Activated CD8-positive, alpha-beta memory T cell treated with anti-CD3 and anti-CD28 coated beads, Interleukin-2, amount 10 ng/mL, durations not matched to agents 7 days and 5 days (primary cell): ENCODE measurements at regions of chr16 and their contacts with region 1.

Region 1: DNA sequence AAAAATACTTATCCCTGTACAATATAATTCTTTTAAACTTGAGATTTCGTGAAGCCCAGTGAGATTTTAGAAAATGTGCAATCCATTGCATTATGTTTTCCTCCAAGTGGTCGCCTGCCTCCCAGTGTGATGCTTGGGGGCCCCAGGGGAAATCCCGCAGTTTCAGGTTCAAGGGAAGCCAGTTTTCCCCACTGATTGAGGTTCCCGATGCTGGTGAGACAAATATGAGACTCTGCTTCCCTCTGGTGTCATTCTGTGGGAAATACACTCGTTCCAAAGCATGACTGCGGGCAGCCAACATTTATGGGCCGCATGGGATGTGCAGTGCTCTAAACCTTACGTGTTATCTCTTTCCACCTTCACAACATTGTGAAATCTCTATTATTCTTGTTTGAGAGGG is 200.8 kb downstream of the PRKCB start:
- DNase-seq: no peak
- ATAC-seq: peak; percentile 32
- H3K4me3 Mint-ChIP-seq: no peak overlapping the region
- H3K27ac Mint-ChIP-seq: peak overlapping the region; percentile 28
- H3K4me1 Mint-ChIP-seq: peaks cover 45% of the 10 kb centered on the region
- H3K27me3 Mint-ChIP-seq: no peaks in the 10 kb centered on the region

Region 2: DNA sequence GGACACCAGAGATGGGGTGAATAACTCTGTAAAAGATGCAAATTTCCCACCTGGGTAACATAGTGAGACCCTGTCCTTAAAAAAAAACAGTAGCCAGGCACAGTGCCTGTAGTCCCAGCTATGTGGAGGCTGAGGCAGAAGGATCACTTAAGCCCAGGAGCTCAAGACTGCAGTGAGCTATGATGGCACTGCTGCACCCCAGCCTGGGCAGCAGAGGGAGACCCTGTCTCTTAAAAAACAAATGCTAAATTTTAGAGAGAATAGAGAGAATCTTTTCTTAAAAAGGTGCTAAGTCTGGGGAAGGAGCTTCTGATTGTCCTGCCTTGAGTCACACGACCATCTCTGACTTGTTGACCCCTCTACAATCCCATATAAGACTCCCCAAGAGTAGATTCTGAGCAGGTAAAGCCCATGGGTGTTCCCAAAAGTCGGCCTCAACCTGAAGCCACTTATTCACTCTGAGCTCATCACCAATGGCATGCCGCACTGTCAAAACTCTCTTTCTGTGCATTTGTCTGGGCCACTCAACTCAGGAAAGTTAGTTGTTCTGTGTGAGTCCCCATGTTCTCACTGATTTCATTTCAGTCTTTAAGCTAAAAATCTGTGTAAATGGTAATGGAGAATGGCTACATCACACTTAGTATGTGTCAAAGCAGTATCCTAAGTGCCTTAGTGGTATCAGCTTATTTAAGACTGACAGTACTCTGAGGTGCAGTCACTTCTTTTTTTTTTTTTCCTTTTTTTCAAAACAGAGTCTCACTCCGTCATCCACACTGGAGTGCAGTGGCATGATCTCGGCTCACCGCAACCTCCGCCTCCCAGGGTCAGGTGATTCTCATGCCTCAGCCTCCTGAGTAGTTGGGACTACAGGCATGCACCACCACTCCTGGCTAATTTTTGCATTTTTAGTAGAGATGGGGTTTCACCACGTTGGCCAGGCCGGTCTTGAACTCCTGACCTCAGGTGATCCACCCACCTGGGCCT is 159.2 kb before region 1 on chr16:
- CTCF ChIA-PET with region 1: interaction called, 13 read pairs
- DNase-seq: no peak
- ATAC-seq: no peak
- H3K4me3 Mint-ChIP-seq: no peak overlapping the region
- H3K27ac Mint-ChIP-seq: peak overlapping the region; percentile 54
- H3K4me1 Mint-ChIP-seq: peaks cover 80% of the 10 kb centered on the region
- H3K27me3 Mint-ChIP-seq: no peaks in the 10 kb centered on the region

Region 3: GRCh38 chr16:24208710-24209109 is 172.1 kb after region 1 on chr16:
- CTCF ChIA-PET with region 1: no interaction called
- DNase-seq: no peak
- ATAC-seq: no peak
- H3K4me3 Mint-ChIP-seq: no peak overlapping the region
- H3K27ac Mint-ChIP-seq: no peak overlapping the region
- H3K4me1 Mint-ChIP-seq: no peaks in the 10 kb centered on the region
- H3K27me3 Mint-ChIP-seq: no peaks in the 10 kb centered on the region

Region 4: DNA sequence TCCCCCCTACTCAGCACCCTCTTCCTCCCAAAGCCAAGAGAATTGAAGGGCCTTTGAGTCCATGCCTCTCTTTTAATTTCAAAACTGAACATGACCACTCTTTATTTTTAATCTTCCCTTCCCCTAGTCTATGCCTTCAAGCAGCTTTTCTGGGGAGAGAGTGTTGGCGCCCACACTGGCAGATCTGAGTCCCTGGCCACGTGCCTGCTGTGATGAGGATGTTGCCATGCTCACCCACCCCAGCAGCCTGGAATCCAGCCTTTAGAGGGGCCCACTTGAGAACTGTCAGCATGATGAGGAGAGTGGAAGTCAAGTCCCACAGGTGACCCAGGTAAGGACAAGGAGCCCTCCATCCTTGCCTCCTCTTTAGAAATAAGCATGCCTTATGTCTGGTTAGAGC is 199.2 kb after region 1 on chr16:
- CTCF ChIA-PET with region 1: no interaction called
- DNase-seq: no peak
- ATAC-seq: no peak
- H3K4me3 Mint-ChIP-seq: no peak overlapping the region
- H3K27ac Mint-ChIP-seq: no peak overlapping the region
- H3K4me1 Mint-ChIP-seq: no peaks in the 10 kb centered on the region
- H3K27me3 Mint-ChIP-seq: peaks cover 10% of the 10 kb centered on the region